Activated naive CD4-positive, alpha-beta T cell treated with anti-CD3 and anti-CD28 coated beads for 36 hours (primary cell): ENCODE measurements at regions of chrX and their contacts with region 1.

Region 1: GRCh38 chrX:102950908-102951866 is 14.1 kb downstream of the RAB40AL start:
- DNase-seq: peak; percentile 70
- H3K4me3 Mint-ChIP-seq: peak overlapping the region; percentile 57
- H3K27ac Mint-ChIP-seq: no peak overlapping the region
- H3K4me1 Mint-ChIP-seq: no peaks in the 10 kb centered on the region
- H3K27me3 Mint-ChIP-seq: no peaks in the 10 kb centered on the region

Region 2: GRCh38 chrX:102643275-102643674 is 307.9 kb before region 1 on chrX:
- CTCF ChIA-PET with region 1: no interaction called
- intact Hi-C with region 1: no loop called
- DNase-seq: no peak
- H3K4me3 Mint-ChIP-seq: no peak overlapping the region
- H3K27ac Mint-ChIP-seq: no peak overlapping the region
- H3K4me1 Mint-ChIP-seq: no peaks in the 10 kb centered on the region
- H3K27me3 Mint-ChIP-seq: no peaks in the 10 kb centered on the region

Region 3: GRCh38 chrX:102899940-102900916 is 51.0 kb before region 1 on chrX:
- CTCF ChIA-PET with region 1: interaction called, 10 read pairs
- intact Hi-C with region 1: no loop called
- DNase-seq: peak; percentile 84
- H3K4me3 Mint-ChIP-seq: no peak overlapping the region
- H3K27ac Mint-ChIP-seq: no peak overlapping the region
- H3K4me1 Mint-ChIP-seq: peaks cover 6% of the 10 kb centered on the region
- H3K27me3 Mint-ChIP-seq: no peaks in the 10 kb centered on the region

Region 4: DNA sequence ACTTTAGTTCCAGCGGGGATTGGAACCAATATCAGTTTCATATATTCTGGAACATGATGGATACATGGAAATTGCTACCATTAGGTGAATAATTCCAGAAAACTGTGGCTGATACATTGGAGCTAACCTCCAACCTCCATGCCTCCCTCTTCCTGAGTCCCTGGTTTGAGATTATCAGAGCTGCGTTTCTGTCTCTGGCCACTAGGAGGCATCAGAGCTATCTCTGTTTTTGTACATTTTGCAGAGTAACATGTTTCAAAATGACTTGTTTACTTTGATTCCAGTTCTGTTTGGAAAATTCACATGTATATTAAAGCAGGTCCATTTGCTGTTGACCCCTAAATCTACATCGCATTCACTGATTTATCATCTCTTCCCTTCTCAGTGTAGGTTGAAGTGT is 16.6 kb before region 1 on chrX:
- CTCF ChIA-PET with region 1: interaction called, 18 read pairs
- intact Hi-C with region 1: no loop called
- DNase-seq: peak; percentile 53
- H3K4me3 Mint-ChIP-seq: no peak overlapping the region
- H3K27ac Mint-ChIP-seq: no peak overlapping the region
- H3K4me1 Mint-ChIP-seq: no peaks in the 10 kb centered on the region
- H3K27me3 Mint-ChIP-seq: no peaks in the 10 kb centered on the region

Region 5: GRCh38 chrX:103157496-103158320 is 206.5 kb after region 1 on chrX:
- CTCF ChIA-PET with region 1: interaction called, 3 read pairs
- intact Hi-C with region 1: loop called (anchors 1 kb)
- DNase-seq: peak; percentile 31
- H3K4me3 Mint-ChIP-seq: no peak overlapping the region
- H3K27ac Mint-ChIP-seq: no peak overlapping the region
- H3K4me1 Mint-ChIP-seq: no peaks in the 10 kb centered on the region
- H3K27me3 Mint-ChIP-seq: no peaks in the 10 kb centered on the region

Region 6: DNA sequence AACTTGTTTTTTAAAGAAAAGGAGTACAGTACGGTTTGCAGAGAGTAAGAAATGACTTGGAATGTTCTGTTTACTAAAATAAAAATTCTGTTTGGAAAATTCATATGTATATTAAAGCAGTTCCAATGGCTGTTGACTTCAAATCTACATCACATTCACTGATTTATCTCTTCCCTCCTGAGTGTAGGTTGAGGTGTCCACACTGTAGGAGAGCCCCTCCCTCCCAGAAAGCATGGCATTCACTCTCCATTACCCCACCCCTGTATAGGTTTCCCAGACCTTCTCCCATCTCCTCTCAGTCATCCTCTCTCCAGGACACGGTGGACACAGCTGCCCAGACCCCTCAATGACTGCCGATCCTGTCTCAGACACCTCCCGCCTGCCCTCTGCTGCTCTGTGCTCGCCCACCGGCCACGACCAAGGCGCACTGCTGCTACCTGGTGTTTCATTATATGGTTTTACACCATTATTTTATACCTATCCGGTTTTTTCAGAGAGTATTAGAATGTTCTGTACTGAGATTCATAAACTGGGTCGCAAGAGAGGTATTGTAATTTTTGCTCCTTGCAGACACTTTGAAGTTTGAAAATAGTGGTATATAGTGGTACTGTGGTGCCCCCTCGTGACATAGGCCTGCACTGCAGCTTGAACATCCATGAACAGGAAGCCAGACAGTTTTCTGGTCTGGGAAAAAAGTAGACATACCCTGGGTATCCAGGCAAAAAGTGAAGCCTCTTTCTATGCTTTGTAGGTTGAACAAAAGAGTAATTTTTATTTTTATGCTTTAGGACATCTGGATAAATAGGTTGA is 225.0 kb after region 1 on chrX:
- CTCF ChIA-PET with region 1: interaction called, 26 read pairs
- intact Hi-C with region 1: loop called (anchors 1 kb)
- DNase-seq: peak; percentile 75
- H3K4me3 Mint-ChIP-seq: peak overlapping the region; percentile 20
- H3K27ac Mint-ChIP-seq: no peak overlapping the region
- H3K4me1 Mint-ChIP-seq: peaks cover 3% of the 10 kb centered on the region
- H3K27me3 Mint-ChIP-seq: peaks cover 3% of the 10 kb centered on the region